Activated CD4-positive, alpha-beta T cell treated with anti-CD3 and anti-CD28 coated beads for 36 hours (primary cell): ENCODE measurements at regions of chr3 and their contacts with region 1.

Region 1: DNA sequence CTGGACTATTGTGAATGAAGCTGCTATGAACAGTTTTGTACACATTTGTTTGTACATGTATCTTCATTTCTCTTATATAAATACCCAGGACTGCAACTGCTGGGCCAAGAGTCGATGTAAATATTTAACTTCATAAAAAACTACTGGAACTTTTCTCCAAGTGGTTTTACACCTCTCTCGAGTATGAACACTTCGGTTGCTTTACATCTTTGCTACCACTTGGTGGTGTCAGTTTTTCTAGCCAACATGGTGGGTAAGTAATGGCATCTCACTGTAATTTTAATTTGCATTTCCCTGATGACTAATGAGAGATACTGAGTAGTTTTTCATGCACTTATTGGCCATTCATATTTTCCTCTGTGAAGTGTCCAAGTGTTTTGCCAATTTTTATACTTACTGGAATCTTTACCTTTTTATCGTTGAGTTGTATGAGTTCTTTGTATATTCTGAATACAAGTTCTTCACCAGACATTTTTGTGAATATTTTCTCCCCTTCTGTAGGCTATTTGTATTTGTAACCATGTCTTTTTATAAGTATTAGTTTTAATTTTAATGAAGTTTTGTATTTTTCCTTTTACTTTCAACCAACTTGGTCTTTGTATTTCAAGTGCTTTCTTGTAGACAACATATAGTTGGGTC is 44.4 kb downstream of the PCOLCE2 start:
- DNase-seq: no peak
- ATAC-seq: peak; percentile 90
- H3K4me3 Mint-ChIP-seq: no peak overlapping the region
- H3K27ac Mint-ChIP-seq: no peak overlapping the region
- H3K4me1 Mint-ChIP-seq: peaks cover 2% of the 10 kb centered on the region
- H3K27me3 Mint-ChIP-seq: peaks cover 4% of the 10 kb centered on the region

Region 2: GRCh38 chr3:142904639-142905436 is 60.4 kb after region 1 on chr3:
- CTCF ChIA-PET with region 1: no interaction called
- POLR2A ChIA-PET with region 1: no interaction called
- intact Hi-C with region 1: loop called in 1 of 2 experiments (anchors 5 kb)
- DNase-seq: no peak
- ATAC-seq: no peak
- H3K4me3 Mint-ChIP-seq: no peak overlapping the region
- H3K27ac Mint-ChIP-seq: no peak overlapping the region
- H3K4me1 Mint-ChIP-seq: peaks cover 5% of the 10 kb centered on the region
- H3K27me3 Mint-ChIP-seq: peaks cover 25% of the 10 kb centered on the region

Region 3: DNA sequence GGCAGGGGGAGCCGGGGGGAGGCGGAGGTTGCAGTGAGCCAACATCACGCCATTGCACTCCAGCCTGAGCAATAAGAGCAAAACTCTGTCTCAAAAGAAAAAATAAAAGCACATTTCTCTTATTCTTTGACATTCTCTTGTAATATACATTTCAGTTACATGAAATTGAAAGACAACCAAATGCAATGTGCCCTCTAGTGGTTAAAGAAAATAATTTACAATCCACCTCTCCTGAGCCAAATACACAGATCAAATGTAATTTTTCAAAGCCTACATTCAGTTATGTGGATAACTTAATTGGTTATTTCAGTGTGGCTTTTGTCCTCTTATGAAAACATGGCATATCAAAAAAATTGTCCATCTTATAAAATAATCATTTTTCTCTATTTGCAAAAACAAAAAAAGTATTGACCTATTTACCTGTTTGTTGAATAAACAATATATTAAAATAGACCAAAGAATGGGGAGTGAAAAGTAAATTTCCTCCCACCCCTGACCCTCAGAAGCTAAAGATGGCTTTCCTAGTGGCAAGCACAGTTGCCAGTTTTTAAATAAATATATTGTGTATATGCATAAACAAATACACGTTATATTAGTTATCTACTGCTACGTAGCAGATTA is 142.7 kb after region 1 on chr3:
- CTCF ChIA-PET with region 1: no interaction called
- POLR2A ChIA-PET with region 1: no interaction called
- intact Hi-C with region 1: loop called (anchors 1 to 5 kb)
- DNase-seq: no peak
- ATAC-seq: peak; percentile 51
- H3K4me3 Mint-ChIP-seq: no peak overlapping the region
- H3K27ac Mint-ChIP-seq: no peak overlapping the region
- H3K4me1 Mint-ChIP-seq: no peaks in the 10 kb centered on the region
- H3K27me3 Mint-ChIP-seq: peaks cover 14% of the 10 kb centered on the region

Region 4: DNA sequence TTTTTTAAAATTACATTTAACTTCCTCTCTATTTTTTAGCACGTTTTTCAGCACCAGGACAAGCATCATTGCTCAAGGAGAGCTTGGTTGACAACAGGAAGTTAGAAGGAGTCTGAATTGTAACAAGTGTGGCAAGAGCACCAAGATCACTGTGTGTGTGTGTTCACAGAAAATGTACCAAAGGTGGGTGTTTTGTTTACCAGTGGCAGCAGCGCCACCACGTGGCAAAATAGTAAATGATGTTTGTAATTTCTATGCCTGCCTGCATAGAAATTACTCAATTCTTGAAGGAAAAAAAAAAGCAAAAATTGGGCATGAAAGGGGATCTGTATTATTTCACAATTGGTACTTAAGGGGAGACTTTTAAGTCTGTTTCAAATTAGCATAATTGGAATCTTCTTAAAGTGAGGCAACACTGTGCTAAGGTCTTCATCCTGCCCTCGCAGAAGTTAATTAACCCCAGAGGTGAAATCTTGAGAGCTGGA is 149.5 kb after region 1 on chr3:
- CTCF ChIA-PET with region 1: no interaction called
- POLR2A ChIA-PET with region 1: no interaction called
- intact Hi-C with region 1: loop called in 1 of 2 experiments (anchors 5 kb)
- DNase-seq: peak; percentile 76
- ATAC-seq: peak; percentile 74
- H3K4me3 Mint-ChIP-seq: no peak overlapping the region
- H3K27ac Mint-ChIP-seq: no peak overlapping the region
- H3K4me1 Mint-ChIP-seq: peaks cover 4% of the 10 kb centered on the region
- H3K27me3 Mint-ChIP-seq: peaks cover 5% of the 10 kb centered on the region